H1 (cell line): ENCODE measurements at regions of chr6 and their contacts with region 1.

Region 1: DNA sequence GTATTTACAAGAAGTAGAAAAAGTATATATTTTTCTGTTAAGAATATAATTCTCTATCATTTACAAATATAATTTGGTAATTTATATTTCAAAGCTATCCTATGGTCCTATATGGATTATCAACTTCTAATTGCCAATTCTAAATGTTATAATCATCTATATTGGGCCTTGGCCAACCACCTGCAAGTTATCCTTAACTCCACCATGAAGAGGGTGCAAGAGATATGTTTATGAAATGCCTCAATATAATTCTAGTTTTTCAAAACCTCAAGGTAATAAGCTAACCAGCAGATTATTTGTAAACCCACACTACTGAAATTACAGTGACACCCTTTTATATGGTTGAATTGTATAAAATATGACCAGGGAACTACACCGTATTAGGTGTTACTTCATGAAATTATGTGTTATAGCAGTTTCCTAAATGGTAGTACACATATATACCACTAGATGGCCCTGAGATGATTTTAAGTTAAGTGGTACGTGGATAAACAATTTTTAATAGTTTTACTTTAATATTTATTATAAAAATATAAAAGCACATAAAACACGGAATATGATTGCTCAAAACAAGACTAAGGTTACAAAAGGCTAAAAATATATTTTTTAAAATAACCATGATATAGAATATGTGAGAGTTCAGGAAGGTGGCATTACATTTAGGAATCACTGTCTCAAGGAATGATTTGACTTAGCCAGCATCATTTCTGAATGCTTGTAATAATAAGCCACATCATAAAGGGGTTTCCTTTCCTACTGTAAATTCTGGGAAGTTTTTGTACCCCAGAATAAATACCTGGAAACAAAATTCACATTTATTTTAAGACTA is 9.8 kb upstream of the PNISR start:
- DNase-seq: no peak
- H3K4me3 ChIP-seq: no peak overlapping the region
- H3K27ac ChIP-seq: no peak overlapping the region
- H3K4me1 ChIP-seq: no peaks in the 10 kb centered on the region
- H3K27me3 ChIP-seq: no peaks in the 10 kb centered on the region
- CTCF ChIP-seq: peak in 1 of 3 experiments; percentile 30; a peak in 1 of 4 replicates
- EP300 ChIP-seq: no peak
- POLR2A ChIP-seq: no peak
- RAD21 ChIP-seq: no peak

Region 2: DNA sequence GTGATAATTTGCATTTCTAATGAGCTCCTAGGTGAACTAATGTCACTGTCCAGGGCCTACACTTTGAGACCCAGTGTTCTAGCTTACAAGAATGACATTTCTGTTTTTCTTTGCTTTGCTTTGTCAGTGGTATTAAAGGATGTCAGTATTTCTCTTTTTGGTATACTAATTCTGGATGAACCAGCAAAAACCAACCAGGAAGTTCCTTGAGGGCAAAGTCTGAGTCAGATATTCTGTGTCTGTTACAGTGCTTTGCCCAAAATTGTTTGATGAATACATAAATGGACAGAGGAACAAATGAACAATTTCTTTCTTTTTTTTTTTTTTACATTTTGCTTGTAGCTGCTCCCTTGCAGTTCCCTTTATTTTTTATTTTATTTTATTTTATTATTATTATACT is 56.3 kb before region 1 on chr6:
- CTCF ChIA-PET with region 1: no interaction called
- POLR2A ChIA-PET with region 1: no interaction called
- DNase-seq: no peak
- H3K4me3 ChIP-seq: no peak overlapping the region
- H3K27ac ChIP-seq: no peak overlapping the region
- H3K4me1 ChIP-seq: no peaks in the 10 kb centered on the region
- H3K27me3 ChIP-seq: no peaks in the 10 kb centered on the region
- CTCF ChIP-seq: no peak
- EP300 ChIP-seq: no peak
- POLR2A ChIP-seq: no peak
- RAD21 ChIP-seq: no peak

Region 3: GRCh38 chr6:99446076-99446475 is 11.2 kb after region 1 on chr6:
- CTCF ChIA-PET with region 1: interaction called, 13 read pairs
- POLR2A ChIA-PET with region 1: interaction called, 3 read pairs
- DNase-seq: no peak
- H3K4me3 ChIP-seq: no peak overlapping the region
- H3K27ac ChIP-seq: no peak overlapping the region
- H3K4me1 ChIP-seq: no peaks in the 10 kb centered on the region; a peak in 1 of 7 replicates
- H3K27me3 ChIP-seq: no peaks in the 10 kb centered on the region
- CTCF ChIP-seq: no peak
- EP300 ChIP-seq: no peak
- POLR2A ChIP-seq: no peak
- RAD21 ChIP-seq: no peak

Region 4: GRCh38 chr6:99575544-99576227 is 140.8 kb after region 1 on chr6:
- CTCF ChIA-PET with region 1: no interaction called
- POLR2A ChIA-PET with region 1: no interaction called
- DNase-seq: no peak
- H3K4me3 ChIP-seq: no peak overlapping the region
- H3K27ac ChIP-seq: no peak overlapping the region
- H3K4me1 ChIP-seq: no peaks in the 10 kb centered on the region
- H3K27me3 ChIP-seq: peaks cover 0 to 4% (median under 1%) of the 10 kb centered on the region in 4 experiments; a peak in 2 of 7 replicates
- CTCF ChIP-seq: no peak
- EP300 ChIP-seq: no peak
- POLR2A ChIP-seq: no peak
- RAD21 ChIP-seq: no peak

Region 5: GRCh38 chr6:101125380-101125971 is 1690.6 kb after region 1 on chr6:
- CTCF ChIA-PET with region 1: no interaction called
- POLR2A ChIA-PET with region 1: no interaction called
- DNase-seq: no peak
- H3K4me3 ChIP-seq: no peak overlapping the region
- H3K27ac ChIP-seq: no peak overlapping the region
- H3K4me1 ChIP-seq: no peaks in the 10 kb centered on the region
- H3K27me3 ChIP-seq: no peaks in the 10 kb centered on the region
- CTCF ChIP-seq: no peak
- EP300 ChIP-seq: no peak
- POLR2A ChIP-seq: no peak
- RAD21 ChIP-seq: no peak